Natural killer cell (primary cell): ENCODE measurements at regions of chr20 and their contacts with region 1.

Region 1: GRCh38 chr20:35619196-35620095 is 3.8 kb downstream of the SPAG4 start:
- DNase-seq: peak; percentile 71 to 90
- ATAC-seq: peak; percentile 18 to 22 (median 22)
- H3K4me3 ChIP-seq: peak overlapping the region; percentile 44
- H3K4me3 Mint-ChIP-seq: peak overlapping the region; percentile 86
- H3K27ac ChIP-seq: no peak overlapping the region
- H3K27ac Mint-ChIP-seq: peak overlapping the region; percentile 34 to 99
- H3K4me1 ChIP-seq: peaks cover 40% of the 10 kb centered on the region
- H3K4me1 Mint-ChIP-seq: peaks cover 23 to 45% of the 10 kb centered on the region in 2 donors
- H3K27me3 ChIP-seq: peaks cover 10% of the 10 kb centered on the region
- H3K27me3 Mint-ChIP-seq: peaks cover 0 to 2% of the 10 kb centered on the region in 2 donors
- CTCF ChIP-seq: peak; percentile 55

Region 2: DNA sequence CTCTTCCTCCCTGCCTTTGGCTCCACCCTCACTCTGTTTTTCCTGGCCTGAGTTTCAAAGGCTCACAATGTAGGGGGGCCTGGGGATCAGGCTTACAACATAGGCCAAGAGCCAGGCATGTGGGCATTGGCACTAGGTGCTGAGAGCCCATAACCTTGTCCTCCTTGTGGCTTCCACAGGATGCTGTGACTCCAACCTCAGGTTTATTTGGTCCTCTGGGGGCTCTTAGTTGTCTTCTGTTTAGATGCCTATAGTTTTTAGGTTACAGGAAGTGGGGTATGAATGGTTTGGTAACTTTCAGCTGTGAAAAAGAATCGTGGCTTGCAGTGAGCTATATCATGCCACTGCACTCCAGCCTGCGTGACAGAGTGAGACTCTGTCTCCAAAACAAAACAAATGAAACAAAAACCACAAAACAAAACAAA is 367.4 kb before region 1 on chr20:
- intact Hi-C with region 1: loop called (anchors 10 kb)
- DNase-seq: peak; percentile 46 to 79
- ATAC-seq: peak; percentile 91 to 94 (median 92)
- H3K4me3 ChIP-seq: no peak overlapping the region
- H3K4me3 Mint-ChIP-seq: peak overlapping the region; percentile 83
- H3K27ac ChIP-seq: peak overlapping the region; percentile 89
- H3K27ac Mint-ChIP-seq: peak overlapping the region; percentile 94 to 95
- H3K4me1 ChIP-seq: peaks cover 38% of the 10 kb centered on the region
- H3K4me1 Mint-ChIP-seq: peaks cover 24% of the 10 kb centered on the region in 2 donors
- H3K27me3 ChIP-seq: no peaks in the 10 kb centered on the region
- H3K27me3 Mint-ChIP-seq: no peaks in the 10 kb centered on the region
- CTCF ChIP-seq: no peak

Region 3: DNA sequence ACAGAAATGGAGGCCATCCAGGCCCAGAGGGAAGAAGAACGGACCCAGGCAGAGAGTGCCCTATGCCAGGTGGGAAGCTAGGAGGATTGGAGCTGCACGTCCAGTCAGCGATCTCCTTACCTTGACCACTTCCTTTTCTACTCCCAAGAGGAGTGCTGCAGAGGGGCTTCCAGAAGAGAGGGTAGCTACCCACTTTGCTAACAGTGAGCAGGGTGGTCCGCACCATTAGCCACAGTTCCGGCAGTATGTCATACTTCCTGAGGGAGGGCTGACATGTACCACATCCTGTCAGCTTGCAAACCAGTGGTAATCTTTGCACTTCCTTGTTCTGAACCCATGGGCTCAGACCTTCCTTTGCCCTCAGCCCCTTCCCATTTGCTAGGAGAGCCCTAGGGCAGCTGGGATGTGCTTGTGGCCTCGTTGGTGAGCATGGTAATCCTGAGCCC is 128.7 kb before region 1 on chr20:
- intact Hi-C with region 1: loop called (anchors 2 kb)
- DNase-seq: peak; percentile 65 to 84
- ATAC-seq: peak; percentile 91 to 96 (median 95)
- H3K4me3 ChIP-seq: peak overlapping the region; percentile 93
- H3K4me3 Mint-ChIP-seq: peak overlapping the region; percentile 99
- H3K27ac ChIP-seq: peak overlapping the region; percentile 93
- H3K27ac Mint-ChIP-seq: peak overlapping the region; percentile 97 to 99
- H3K4me1 ChIP-seq: peaks cover 55% of the 10 kb centered on the region
- H3K4me1 Mint-ChIP-seq: peaks cover 80% of the 10 kb centered on the region in 2 donors
- H3K27me3 ChIP-seq: no peaks in the 10 kb centered on the region
- H3K27me3 Mint-ChIP-seq: no peaks in the 10 kb centered on the region
- CTCF ChIP-seq: no peak

Region 4: GRCh38 chr20:35601008-35601973 is 18.2 kb before region 1 on chr20:
- intact Hi-C with region 1: loop called (anchors 1 kb)
- DNase-seq: peak; percentile 61 to 91
- ATAC-seq: peak; percentile 83 to 88 (median 86)
- H3K4me3 ChIP-seq: peak overlapping the region; percentile 48
- H3K4me3 Mint-ChIP-seq: peak overlapping the region; percentile 76
- H3K27ac ChIP-seq: no peak overlapping the region
- H3K27ac Mint-ChIP-seq: peak overlapping the region in 1 of 2 donors; percentile 75
- H3K4me1 ChIP-seq: peaks cover 19% of the 10 kb centered on the region
- H3K4me1 Mint-ChIP-seq: peaks cover 0 to 12% of the 10 kb centered on the region in 2 donors
- H3K27me3 ChIP-seq: peaks cover 20% of the 10 kb centered on the region
- H3K27me3 Mint-ChIP-seq: peaks cover 24 to 37% of the 10 kb centered on the region in 2 donors
- CTCF ChIP-seq: peak; percentile 45

Region 5: GRCh38 chr20:35771689-35772562 is 152.5 kb after region 1 on chr20 and contains the start of gene PHF20:
- intact Hi-C with region 1: loop called (anchors 2 kb)
- DNase-seq: peak; percentile 100
- ATAC-seq: peak; percentile 77 to 93 (median 80)
- H3K4me3 ChIP-seq: peak within 1 kb of the TSS; percentile 46
- H3K4me3 Mint-ChIP-seq: peak within 1 kb of the TSS; percentile 96
- H3K27ac ChIP-seq: peak within 1 kb of the TSS; percentile 99
- H3K27ac Mint-ChIP-seq: peak within 1 kb of the TSS; percentile 98 to 100
- H3K4me1 ChIP-seq: peaks cover 73% of the 10 kb centered on the region
- H3K4me1 Mint-ChIP-seq: peaks cover 65 to 70% of the 10 kb centered on the region in 2 donors
- H3K27me3 ChIP-seq: no peaks in the 10 kb centered on the region
- H3K27me3 Mint-ChIP-seq: no peaks in the 10 kb centered on the region
- CTCF ChIP-seq: no peak
- total RNA-seq, gene PHF20: 151 to 165 (median 161) TPM

Region 6: DNA sequence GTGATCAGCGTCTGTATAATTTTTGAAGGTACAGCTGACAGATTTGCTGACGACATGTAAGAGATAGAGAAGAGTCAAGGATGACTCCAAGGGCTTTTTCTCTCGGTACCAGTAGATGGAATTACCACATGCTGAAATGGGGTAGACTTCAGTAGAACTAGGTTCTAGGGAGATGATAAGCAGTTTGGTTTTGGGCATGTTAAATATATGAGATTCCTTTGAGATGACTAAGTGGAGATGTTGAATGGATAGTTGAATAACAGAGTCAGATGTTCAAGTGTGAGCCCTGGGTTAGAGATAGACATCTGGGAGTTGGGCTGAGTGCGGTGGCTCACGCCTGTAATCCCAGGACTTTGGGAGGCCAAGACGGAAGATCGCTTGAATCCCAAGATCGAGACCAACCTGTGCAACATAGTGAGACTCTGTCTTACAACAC is 202.4 kb after region 1 on chr20:
- intact Hi-C with region 1: no loop called
- DNase-seq: no peak
- ATAC-seq: no peak
- H3K4me3 ChIP-seq: no peak overlapping the region
- H3K4me3 Mint-ChIP-seq: no peak overlapping the region
- H3K27ac ChIP-seq: no peak overlapping the region
- H3K27ac Mint-ChIP-seq: peak overlapping the region; percentile 9 to 33
- H3K4me1 ChIP-seq: no peaks in the 10 kb centered on the region
- H3K4me1 Mint-ChIP-seq: peaks cover 33 to 40% of the 10 kb centered on the region in 2 donors
- H3K27me3 ChIP-seq: no peaks in the 10 kb centered on the region
- H3K27me3 Mint-ChIP-seq: no peaks in the 10 kb centered on the region
- CTCF ChIP-seq: no peak